ENCODE measurements at regions of chr13 and their contacts with region 1.

Region 1: GRCh38 chr13:86882107-86882506 is 789.1 kb upstream of the SLITRK5 start:
- DNase-seq: no peak
- H3K4me3 ChIP-seq: no peak overlapping the region
- H3K27ac ChIP-seq: no peak overlapping the region
- H3K27me3 ChIP-seq: no peaks in the 10 kb centered on the region
- CTCF ChIP-seq: no peak

Region 2: DNA sequence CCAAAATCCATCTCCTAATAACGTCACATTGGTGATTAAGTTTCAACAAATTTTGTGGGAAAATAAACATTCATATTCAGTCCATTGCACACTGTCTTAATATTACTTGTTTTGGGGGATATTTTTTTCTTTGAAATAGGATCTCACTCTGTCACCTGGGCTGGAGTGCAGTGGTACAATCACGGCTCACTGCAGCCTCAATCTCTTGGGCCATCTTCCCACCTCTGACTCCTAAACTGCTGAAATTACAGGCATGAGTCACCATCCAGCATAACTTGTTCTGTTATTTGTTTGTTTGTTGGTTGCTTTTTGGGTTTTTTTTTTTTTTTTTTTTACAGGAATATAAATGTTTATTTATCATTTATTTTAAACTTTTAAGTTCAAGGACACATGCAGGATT is 526.8 kb before region 1 on chr13:
- CTCF ChIA-PET with region 1: no interaction called
- POLR2A ChIA-PET with region 1: no interaction called
- DNase-seq: no peak
- H3K4me3 ChIP-seq: no peak overlapping the region
- H3K27ac ChIP-seq: no peak overlapping the region
- H3K27me3 ChIP-seq: no peaks in the 10 kb centered on the region
- CTCF ChIP-seq: no peak

Region 3: DNA sequence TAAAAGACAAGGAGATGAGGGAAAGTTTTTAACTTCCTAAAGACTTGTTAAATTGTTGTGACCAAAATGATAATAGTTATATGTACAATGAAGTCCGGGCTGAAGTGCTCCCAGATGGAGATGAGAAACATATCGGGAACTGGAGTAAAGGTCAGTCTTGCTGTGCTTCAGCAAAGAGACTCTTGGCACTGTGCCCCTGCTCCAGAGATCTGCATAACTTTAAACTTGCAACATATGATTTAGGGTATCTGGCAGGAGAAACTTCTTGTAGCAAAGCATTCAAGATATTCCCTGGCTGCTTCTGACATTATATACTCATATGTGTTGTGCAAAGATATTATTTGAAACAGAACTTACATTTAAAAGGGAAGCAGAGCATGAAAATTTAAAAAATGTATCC is 296.3 kb before region 1 on chr13:
- CTCF ChIA-PET with region 1: no interaction called
- POLR2A ChIA-PET with region 1: no interaction called
- DNase-seq: peak; percentile 89
- H3K4me3 ChIP-seq: no peak overlapping the region
- H3K27ac ChIP-seq: no peak overlapping the region
- H3K27me3 ChIP-seq: no peaks in the 10 kb centered on the region
- CTCF ChIP-seq: no peak

Region 4: DNA sequence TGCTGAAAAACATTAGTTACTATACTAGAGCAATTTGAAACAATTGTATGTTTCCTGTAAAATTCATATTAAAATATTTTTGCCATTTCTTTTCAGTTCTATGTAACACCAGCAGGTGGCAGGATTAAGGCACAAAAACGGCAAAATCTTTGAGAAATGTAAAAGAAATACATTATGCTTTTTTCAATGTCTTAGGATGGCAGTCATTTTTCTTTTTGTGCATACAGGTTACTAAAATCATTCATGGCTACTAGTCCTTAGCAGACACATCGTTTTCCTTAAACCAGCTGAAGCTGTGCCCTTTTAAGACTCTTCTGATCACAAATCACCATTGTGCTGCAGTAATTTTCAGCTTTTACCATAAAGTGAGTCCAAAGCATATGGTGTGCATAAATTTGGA is 11.7 kb before region 1 on chr13:
- CTCF ChIA-PET with region 1: interaction called, 10 read pairs
- POLR2A ChIA-PET with region 1: no interaction called
- DNase-seq: no peak
- H3K4me3 ChIP-seq: no peak overlapping the region
- H3K27ac ChIP-seq: no peak overlapping the region
- H3K27me3 ChIP-seq: no peaks in the 10 kb centered on the region
- CTCF ChIP-seq: peak; percentile 66

Region 5: DNA sequence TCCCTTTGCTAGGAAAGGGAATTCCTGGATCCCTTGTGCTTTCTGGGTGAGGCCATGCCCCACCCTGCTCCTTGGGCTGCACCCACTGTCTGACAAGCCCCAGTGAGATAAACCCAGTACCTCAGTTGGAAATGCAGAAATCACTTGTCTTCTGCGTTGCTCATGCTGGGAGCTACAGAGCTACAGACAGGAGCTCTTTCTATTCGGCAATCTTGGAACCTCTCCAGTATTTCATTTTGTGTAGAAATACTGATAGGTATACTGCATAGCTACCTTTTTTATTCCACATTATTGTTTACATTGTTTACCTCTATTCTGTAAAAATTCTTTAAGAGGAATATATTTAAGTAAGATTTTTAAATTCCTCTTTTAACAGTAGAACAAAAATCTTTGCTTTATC is 486.5 kb after region 1 on chr13:
- CTCF ChIA-PET with region 1: no interaction called
- POLR2A ChIA-PET with region 1: no interaction called
- DNase-seq: no peak
- H3K4me3 ChIP-seq: no peak overlapping the region
- H3K27ac ChIP-seq: no peak overlapping the region
- H3K27me3 ChIP-seq: no peaks in the 10 kb centered on the region
- CTCF ChIP-seq: no peak

Measured in AG04450 (cell line).